Activated naive CD4-positive, alpha-beta T cell treated with anti-CD3 and anti-CD28 coated beads for 36 hours (primary cell): ENCODE measurements at regions of chr11 and their contacts with region 1.

Region 1: DNA sequence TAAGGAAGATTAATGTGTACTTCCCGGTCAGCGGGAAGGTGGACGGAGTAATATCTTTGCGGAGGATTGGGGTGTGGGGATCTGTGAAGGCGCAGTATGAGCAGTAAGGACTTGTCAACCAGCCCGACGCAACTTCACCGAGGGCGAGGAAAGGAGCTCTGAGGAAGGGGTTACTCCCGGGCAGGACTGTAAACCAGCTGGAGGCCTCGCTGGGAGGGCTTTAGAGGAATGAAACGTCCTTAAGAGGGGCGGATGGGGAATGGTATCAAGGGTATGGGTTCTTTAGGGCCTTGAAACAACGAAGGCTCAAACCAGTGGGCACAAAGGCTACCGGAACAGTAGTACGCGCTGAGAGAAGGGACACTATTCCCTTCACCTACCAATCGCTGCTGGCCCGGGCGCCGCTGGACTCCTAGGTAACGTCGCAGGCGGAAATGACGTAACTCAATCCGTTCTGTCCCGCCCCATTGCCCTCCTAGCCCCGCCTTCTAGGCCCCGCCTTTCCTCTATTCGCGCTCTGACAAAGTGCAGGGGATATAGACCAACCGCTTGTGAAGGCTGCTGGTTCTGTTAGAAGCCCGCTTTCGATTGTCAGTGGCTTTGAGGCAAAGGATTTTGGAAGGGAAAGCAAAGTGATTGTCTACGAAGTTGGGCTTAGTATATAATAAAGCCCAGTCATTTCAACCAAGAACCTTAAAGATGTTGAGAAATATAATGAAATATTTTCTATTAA is at the start of gene C11orf65:
- DNase-seq: peak; percentile 98
- H3K4me3 Mint-ChIP-seq: peak within 1 kb of the TSS; percentile 94
- H3K27ac Mint-ChIP-seq: peak within 1 kb of the TSS; percentile 96
- H3K4me1 Mint-ChIP-seq: peaks cover 8% of the 10 kb centered on the region
- H3K27me3 Mint-ChIP-seq: no peaks in the 10 kb centered on the region
- total RNA-seq, gene C11orf65: 2.2 to 3.1 TPM

Region 2: DNA sequence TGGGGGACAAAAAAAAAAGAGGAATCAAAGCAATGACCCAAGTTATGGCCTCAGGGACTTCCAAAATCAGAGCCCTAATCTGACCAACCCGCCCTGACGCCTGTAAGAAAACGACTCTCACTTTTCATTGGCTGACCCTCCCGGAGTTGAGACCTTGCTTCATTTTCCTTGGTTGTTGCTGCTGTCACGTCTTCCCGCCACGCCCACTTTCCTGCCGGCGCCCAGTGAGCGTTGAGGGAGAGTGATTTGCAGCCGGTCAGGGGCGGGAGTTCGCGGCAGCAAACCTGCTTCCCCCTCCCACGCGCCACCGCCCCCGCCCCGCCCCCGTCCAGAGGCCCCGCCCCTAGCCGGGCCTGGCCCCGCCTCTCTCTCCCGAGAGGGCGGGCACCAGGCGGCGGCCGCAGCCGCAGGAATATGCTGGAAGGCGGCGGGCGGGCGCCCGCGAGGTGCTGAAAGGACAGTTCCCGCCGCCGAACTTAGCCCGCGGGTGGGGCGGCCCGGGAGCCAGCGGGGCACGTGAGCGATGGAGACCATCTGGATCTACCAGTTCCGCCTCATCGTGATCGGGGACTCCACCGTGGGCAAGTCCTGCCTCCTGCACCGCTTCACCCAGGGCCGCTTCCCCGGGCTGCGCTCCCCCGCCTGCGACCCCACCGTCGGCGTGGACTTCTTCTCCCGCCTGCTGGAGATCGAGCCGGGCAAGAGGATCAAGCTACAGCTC is 539.1 kb before region 1 on chr11 and contains the start of gene RAB39A:
- CTCF ChIA-PET with region 1: no interaction called
- intact Hi-C with region 1: loop called (anchors 5 kb)
- DNase-seq: peak; percentile 83
- H3K4me3 Mint-ChIP-seq: peak within 1 kb of the TSS; percentile 65
- H3K27ac Mint-ChIP-seq: no peak within 1 kb of the TSS
- H3K4me1 Mint-ChIP-seq: peaks cover 12% of the 10 kb centered on the region
- H3K27me3 Mint-ChIP-seq: peaks cover 44% of the 10 kb centered on the region
- total RNA-seq, gene RAB39A: not detected

Region 3: DNA sequence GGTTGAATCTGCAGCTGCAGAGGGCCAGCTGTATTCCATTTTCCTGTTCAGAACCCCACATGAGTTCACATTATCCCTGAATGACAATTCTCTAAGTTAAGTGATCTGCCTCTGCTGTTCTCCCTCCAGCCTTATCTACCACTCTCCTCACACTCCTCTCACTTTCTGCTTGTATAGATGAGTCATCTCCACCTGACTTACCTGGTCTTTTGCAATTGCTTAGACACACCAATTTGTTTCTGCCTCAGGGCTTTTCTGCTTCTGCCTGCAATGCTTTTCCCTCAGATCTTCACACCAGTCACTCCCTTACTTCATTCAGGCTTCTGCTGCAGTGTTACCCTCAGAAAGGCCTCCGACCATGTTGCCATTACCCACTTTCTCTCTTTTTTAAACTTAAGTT is 126.3 kb before region 1 on chr11:
- CTCF ChIA-PET with region 1: no interaction called
- intact Hi-C with region 1: loop called (anchors 2 kb)
- DNase-seq: no peak
- H3K4me3 Mint-ChIP-seq: no peak overlapping the region
- H3K27ac Mint-ChIP-seq: no peak overlapping the region
- H3K4me1 Mint-ChIP-seq: peaks cover 32% of the 10 kb centered on the region
- H3K27me3 Mint-ChIP-seq: no peaks in the 10 kb centered on the region

Region 4: DNA sequence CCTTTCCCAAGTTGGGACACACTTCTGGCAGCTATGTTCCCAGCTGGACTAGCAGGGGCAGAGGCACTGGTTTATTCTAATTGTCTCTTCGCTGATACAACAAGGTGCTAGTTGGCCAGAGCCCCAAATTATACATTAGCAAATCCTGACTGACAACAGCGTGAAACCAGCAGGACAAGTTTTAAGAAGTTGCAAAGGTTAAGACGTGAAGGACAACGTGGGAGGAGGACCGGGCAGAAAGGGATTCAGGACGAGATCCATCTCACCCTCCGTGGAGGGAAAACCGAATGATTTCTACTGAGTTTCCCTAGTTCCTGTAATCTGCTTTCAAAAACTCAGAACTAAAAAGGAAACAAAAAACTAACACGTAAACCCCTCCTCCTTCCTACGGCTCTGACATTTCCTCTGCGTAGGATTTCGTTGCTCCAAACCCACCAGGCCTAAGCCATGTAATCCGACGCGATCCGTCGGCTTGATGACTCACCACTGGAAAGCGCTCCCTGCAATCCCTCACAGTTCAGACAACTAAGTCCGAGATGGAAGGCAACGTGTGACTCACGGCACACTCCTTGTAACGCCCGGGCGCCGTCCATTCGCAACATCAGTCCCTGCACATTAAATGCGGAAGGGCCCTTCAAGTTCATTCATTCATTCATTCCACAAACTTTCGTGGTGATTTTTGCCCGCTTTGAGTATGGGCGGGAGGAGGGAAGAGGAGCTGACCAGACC is 30.2 kb after region 1 on chr11:
- CTCF ChIA-PET with region 1: no interaction called
- intact Hi-C with region 1: loop called (anchors 1 kb)
- DNase-seq: peak; percentile 84
- H3K4me3 Mint-ChIP-seq: peak overlapping the region; percentile 85
- H3K27ac Mint-ChIP-seq: peak overlapping the region; percentile 92
- H3K4me1 Mint-ChIP-seq: peaks cover 16% of the 10 kb centered on the region
- H3K27me3 Mint-ChIP-seq: no peaks in the 10 kb centered on the region

Region 5: GRCh38 chr11:108664730-108665525 is 197.7 kb after region 1 on chr11 and contains the start of gene DDX10:
- CTCF ChIA-PET with region 1: no interaction called
- intact Hi-C with region 1: loop called (anchors 1 kb)
- DNase-seq: peak; percentile 99
- H3K4me3 Mint-ChIP-seq: peak within 1 kb of the TSS; percentile 99
- H3K27ac Mint-ChIP-seq: peak within 1 kb of the TSS; percentile 86
- H3K4me1 Mint-ChIP-seq: peaks cover 38% of the 10 kb centered on the region
- H3K27me3 Mint-ChIP-seq: no peaks in the 10 kb centered on the region
- total RNA-seq, gene DDX10: 36.6 to 43.0 TPM

Region 6: GRCh38 chr11:108818971-108819370 is 351.7 kb after region 1 on chr11:
- CTCF ChIA-PET with region 1: no interaction called
- intact Hi-C with region 1: no loop called
- DNase-seq: no peak
- H3K4me3 Mint-ChIP-seq: no peak overlapping the region
- H3K27ac Mint-ChIP-seq: no peak overlapping the region
- H3K4me1 Mint-ChIP-seq: peaks cover 2% of the 10 kb centered on the region
- H3K27me3 Mint-ChIP-seq: no peaks in the 10 kb centered on the region